Gastrocnemius medialis (tissue), 4 donors: ENCODE measurements at regions of chr18 and their contacts with region 1.

Region 1: DNA sequence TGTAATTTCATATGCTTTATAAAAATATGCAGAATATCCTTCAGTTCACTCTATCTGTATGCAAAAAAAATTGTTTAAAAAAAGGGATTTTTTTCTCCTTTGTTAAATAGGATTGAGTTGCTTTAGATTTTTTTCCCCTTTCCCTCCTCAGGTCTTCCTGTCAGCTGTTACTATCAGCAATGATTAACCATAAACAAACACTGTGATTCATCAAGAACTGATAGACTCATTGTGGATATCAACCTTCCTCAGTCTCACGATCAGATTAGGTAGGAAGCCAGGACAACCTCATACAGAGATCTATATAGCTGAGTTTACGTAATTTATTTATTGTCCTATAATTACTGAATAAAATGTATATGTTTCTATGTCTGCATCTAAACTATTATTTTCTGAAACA is 2136.2 kb upstream of the CELF4 start:
- DNase-seq: no peak
- ATAC-seq: no peak
- H3K4me3 ChIP-seq: no peak overlapping the region
- H3K27ac ChIP-seq: no peak overlapping the region
- H3K4me1 ChIP-seq: no peaks in the 10 kb centered on the region
- H3K27me3 ChIP-seq: no peaks in the 10 kb centered on the region
- CTCF ChIP-seq: no peak
- POLR2A ChIP-seq: no peak

Region 2: DNA sequence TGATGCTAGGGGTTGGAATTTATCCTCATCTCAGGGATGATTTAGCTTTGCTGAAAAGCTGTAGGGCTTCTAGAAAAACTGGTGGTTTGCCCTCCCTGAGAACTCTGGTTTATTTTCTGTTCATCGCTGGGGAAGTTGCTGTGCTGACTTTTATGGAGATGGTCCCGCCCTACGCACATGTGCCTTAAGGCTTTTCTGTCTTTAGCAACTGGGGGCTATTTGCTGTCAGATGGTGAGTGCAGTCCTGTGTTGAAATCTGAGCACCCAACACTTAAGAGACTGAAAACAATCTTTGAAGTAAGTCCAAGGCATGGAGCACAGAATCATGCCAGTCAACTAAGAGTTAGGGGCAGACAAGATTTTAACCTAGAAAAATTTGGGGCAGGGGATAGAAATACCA is 12.1 kb after region 1 on chr18:
- in situ Hi-C with region 1: no loop called
- intact Hi-C with region 1: no loop called
- DNase-seq: no peak
- ATAC-seq: no peak
- H3K4me3 ChIP-seq: no peak overlapping the region
- H3K27ac ChIP-seq: no peak overlapping the region
- H3K4me1 ChIP-seq: no peaks in the 10 kb centered on the region
- H3K27me3 ChIP-seq: no peaks in the 10 kb centered on the region
- CTCF ChIP-seq: no peak
- POLR2A ChIP-seq: no peak

Region 3: GRCh38 chr18:39761273-39761672 is 59.4 kb after region 1 on chr18:
- in situ Hi-C with region 1: loop called in 1 of 4 experiments (anchors 10 kb)
- intact Hi-C with region 1: no loop called
- DNase-seq: no peak
- ATAC-seq: no peak
- H3K4me3 ChIP-seq: no peak overlapping the region
- H3K27ac ChIP-seq: no peak overlapping the region
- H3K4me1 ChIP-seq: no peaks in the 10 kb centered on the region
- H3K27me3 ChIP-seq: no peaks in the 10 kb centered on the region
- CTCF ChIP-seq: no peak
- POLR2A ChIP-seq: no peak

Region 4: DNA sequence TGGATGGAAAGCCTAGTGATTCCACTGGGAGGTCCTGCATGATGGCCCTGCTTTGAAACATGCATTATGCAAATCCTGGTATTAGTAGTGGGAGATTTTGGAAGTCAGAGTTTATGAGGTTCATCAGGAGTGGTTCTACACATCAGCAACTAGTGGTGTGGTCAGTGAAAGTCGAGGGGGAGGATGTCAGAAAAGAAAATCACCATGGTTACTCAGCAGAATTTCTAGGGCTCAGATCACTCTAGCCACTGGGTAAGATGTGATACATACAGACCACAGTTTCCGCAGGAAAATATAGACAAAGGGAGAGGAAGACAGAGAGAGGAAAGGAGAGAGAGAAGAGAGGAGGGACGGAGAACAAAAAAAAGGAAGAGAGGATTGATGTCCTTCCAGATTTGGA is 152.5 kb after region 1 on chr18:
- in situ Hi-C with region 1: no loop called
- intact Hi-C with region 1: loop called (anchors 5 kb)
- DNase-seq: no peak
- ATAC-seq: no peak
- H3K4me3 ChIP-seq: no peak overlapping the region
- H3K27ac ChIP-seq: no peak overlapping the region
- H3K4me1 ChIP-seq: no peaks in the 10 kb centered on the region
- H3K27me3 ChIP-seq: no peaks in the 10 kb centered on the region
- CTCF ChIP-seq: no peak
- POLR2A ChIP-seq: no peak